Activated T-helper 2 cell treated with anti-CD3 and anti-CD28 coated beads, Interferon-gamma antibody, Interleukin-2, Interleukin-4, amounts not matched to agents 10 μg/mL and 5 μg/mL and 100 μg/mL, durations not matched to agents 14 hours and 24 hours and 36 hours (primary cell): ENCODE measurements at regions of chr6 and their contacts with region 1.

Region 1: GRCh38 chr6:3157131-3157927 is at the start of gene TUBB2A:
- DNase-seq: peak; percentile 78
- H3K4me3 Mint-ChIP-seq: peak within 1 kb of the TSS; percentile 80
- H3K27ac Mint-ChIP-seq: peak within 1 kb of the TSS; percentile 52
- H3K4me1 Mint-ChIP-seq: peaks cover 16% of the 10 kb centered on the region
- H3K27me3 Mint-ChIP-seq: peaks cover 46% of the 10 kb centered on the region
- total RNA-seq, gene TUBB2A: 7.2 and 7.4 TPM in 2 replicates

Region 2: DNA sequence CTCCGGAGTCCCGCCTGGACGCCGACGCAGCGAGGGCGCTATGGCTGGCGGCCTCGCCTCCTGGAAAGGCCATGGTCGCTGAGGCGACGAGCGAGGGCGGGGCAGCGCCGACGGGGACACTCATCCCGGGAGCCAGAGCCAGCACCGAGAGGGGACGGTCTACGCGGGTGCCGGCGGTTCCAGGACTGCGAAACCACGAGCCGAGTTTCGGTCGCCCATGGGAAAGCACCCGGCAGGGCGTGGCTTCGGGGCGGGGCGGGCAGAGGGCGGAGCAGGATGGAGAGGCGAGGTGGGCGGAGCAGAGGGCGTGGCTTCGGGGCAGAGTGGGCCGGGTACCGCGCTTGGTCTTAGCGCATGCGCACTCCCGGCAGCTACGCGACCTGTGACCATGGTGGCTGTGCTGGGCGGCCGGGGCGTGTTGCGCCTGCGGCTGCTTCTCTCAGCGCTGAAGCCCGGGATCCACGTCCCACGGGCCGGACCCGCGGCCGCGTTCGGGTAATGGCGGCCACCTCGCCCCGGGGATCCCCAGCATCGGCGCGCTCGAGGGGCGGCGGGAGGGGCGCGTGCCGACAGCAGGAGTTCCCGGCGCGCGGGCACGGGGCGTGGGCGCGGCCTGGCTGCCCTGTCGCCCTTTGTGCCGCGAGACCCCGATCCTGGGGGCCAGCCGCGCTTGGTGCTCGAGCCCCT is 38.8 kb before region 1 on chr6 and contains the start of gene BPHL:
- intact Hi-C with region 1: loop called (anchors 1 kb)
- DNase-seq: peak; percentile 98
- H3K4me3 Mint-ChIP-seq: peak within 1 kb of the TSS; percentile 80
- H3K27ac Mint-ChIP-seq: peak within 1 kb of the TSS; percentile 81
- H3K4me1 Mint-ChIP-seq: peaks cover 16% of the 10 kb centered on the region
- H3K27me3 Mint-ChIP-seq: no peaks in the 10 kb centered on the region
- total RNA-seq, gene BPHL: 12.1 and 15.8 TPM in 2 replicates

Region 3: DNA sequence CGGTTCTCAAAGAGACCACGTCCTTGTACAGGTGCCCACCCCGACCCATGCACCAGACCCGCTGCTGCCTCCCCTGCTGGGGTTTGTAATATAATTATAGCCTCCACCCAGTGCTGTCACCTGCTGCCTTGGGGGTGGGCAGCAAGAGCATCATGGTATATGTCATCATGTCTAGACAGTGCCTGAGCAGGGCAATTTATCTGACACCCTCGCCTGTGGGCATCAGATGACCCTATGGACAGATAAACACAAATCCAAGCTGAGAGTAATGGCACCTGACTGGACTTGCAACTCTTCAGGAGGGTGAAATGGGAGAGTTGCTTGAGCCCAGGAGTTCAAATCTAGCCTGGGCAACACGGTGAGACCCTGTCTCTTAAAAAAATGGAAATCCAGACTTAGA is 23.0 kb after region 1 on chr6:
- intact Hi-C with region 1: loop called (anchors 1 kb)
- DNase-seq: no peak
- H3K4me3 Mint-ChIP-seq: no peak overlapping the region
- H3K27ac Mint-ChIP-seq: no peak overlapping the region
- H3K4me1 Mint-ChIP-seq: peaks cover 4% of the 10 kb centered on the region
- H3K27me3 Mint-ChIP-seq: peaks cover 28% of the 10 kb centered on the region

Region 4: GRCh38 chr6:3209114-3210023 is 52.0 kb after region 1 on chr6:
- intact Hi-C with region 1: loop called (anchors 1 kb)
- DNase-seq: no peak
- H3K4me3 Mint-ChIP-seq: peak overlapping the region; percentile 60
- H3K27ac Mint-ChIP-seq: peak overlapping the region; percentile 89
- H3K4me1 Mint-ChIP-seq: peaks cover 26% of the 10 kb centered on the region
- H3K27me3 Mint-ChIP-seq: peaks cover 29% of the 10 kb centered on the region

Region 5: DNA sequence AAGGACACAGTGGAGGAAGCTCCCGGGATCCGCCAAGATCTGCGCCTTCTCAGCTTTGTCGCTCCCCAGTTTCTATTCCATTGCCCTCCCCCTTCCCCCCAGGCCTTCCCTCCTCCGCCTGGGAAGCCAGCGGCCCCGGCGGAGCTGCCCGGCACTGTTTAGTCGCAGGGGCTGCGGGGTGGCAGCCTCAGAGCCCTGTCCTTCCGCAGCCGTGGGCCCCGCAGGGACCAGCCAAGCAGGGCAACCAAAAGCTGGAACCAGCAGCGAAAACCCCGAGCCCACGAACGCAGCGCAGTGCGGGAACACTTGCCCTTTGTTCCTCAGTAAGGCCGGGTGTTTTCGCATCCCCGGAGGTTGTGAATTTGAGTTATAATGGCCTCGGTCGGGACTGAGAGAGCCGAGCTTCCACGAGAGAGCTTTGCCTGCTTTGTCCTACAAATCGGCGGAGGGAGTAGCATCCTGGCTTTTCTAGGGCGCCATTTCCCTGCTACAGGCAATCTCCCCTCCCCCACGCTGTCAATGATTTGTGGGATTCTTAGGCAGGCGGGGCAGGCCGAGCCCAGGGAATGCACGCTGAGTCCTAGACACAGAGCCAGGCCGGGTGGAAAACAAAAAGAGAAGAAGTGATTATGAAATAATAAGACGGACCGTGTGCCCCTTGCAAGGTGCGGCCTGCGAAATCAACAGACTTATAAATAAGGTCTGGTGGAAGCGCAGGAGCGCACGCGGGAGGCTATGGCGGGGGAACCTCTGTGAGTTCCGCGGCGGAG is 74.1 kb after region 1 on chr6:
- intact Hi-C with region 1: loop called (anchors 2 kb)
- DNase-seq: no peak
- H3K4me3 Mint-ChIP-seq: no peak overlapping the region
- H3K27ac Mint-ChIP-seq: no peak overlapping the region
- H3K4me1 Mint-ChIP-seq: peaks cover 28% of the 10 kb centered on the region
- H3K27me3 Mint-ChIP-seq: peaks cover 81% of the 10 kb centered on the region